Heart left ventricle (tissue), 16 donors: ENCODE measurements at regions of chr17 and their contacts with region 1.

Region 1: GRCh38 chr17:36486204-36487194 is at the start of gene ZNHIT3:
- DNase-seq: peak; percentile 92 to 95 (median 93)
- ATAC-seq: peak; percentile 91 to 98 (median 97)
- H3K4me3 ChIP-seq: peak within 1 kb of the TSS; percentile 74 to 99 (median 96)
- H3K27ac ChIP-seq: peak within 1 kb of the TSS; percentile 63 to 88 (median 80)
- H3K4me1 ChIP-seq: peaks cover 2 to 40% (median 29%) of the 10 kb centered on the region in 12 donors
- H3K27me3 ChIP-seq: peaks cover 0 to 14% (median 0%) of the 10 kb centered on the region in 9 donors
- CTCF ChIP-seq: no peak
- POLR2A ChIP-seq: peak in 1 of 2 donors; percentile 64
- total RNA-seq, gene ZNHIT3: 14.8 to 28.5 (median 23.1) TPM

Region 2: DNA sequence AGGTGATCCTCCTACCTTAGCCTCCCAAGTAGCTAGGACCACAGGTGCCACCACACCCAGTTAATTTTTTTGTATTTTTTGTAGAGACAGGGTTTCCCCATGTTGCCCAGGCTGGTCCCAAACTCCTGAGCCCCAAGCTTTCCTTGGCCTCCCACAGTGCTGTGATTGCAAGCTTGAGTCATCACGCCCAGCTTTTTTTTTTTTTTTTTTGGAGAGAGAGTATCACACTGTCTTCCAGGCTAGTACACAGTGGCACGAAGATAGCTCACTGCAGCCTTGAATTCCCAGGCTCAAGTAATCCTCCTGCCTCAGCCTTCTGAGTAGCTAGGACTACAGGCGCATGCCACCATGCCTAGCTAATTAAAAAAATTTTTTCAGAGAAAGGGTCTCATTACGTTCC is 645.0 kb before region 1 on chr17:
- intact Hi-C with region 1: no loop called
- DNase-seq: no peak
- ATAC-seq: peak in 1 of 4 donors; percentile 25
- H3K4me3 ChIP-seq: no peak overlapping the region
- H3K27ac ChIP-seq: no peak overlapping the region
- H3K4me1 ChIP-seq: no peaks in the 10 kb centered on the region
- H3K27me3 ChIP-seq: no peaks in the 10 kb centered on the region
- CTCF ChIP-seq: no peak
- POLR2A ChIP-seq: no peak

Region 3: GRCh38 chr17:35977509-35977908 is 509.0 kb before region 1 on chr17:
- intact Hi-C with region 1: loop called in 5 of 10 experiments (anchors 5 to 10 kb)
- DNase-seq: no peak
- ATAC-seq: no peak
- H3K4me3 ChIP-seq: no peak overlapping the region
- H3K27ac ChIP-seq: no peak overlapping the region
- H3K4me1 ChIP-seq: peaks cover 0 to 16% (median 7%) of the 10 kb centered on the region in 12 donors
- H3K27me3 ChIP-seq: no peaks in the 10 kb centered on the region
- CTCF ChIP-seq: no peak
- POLR2A ChIP-seq: no peak

Region 4: DNA sequence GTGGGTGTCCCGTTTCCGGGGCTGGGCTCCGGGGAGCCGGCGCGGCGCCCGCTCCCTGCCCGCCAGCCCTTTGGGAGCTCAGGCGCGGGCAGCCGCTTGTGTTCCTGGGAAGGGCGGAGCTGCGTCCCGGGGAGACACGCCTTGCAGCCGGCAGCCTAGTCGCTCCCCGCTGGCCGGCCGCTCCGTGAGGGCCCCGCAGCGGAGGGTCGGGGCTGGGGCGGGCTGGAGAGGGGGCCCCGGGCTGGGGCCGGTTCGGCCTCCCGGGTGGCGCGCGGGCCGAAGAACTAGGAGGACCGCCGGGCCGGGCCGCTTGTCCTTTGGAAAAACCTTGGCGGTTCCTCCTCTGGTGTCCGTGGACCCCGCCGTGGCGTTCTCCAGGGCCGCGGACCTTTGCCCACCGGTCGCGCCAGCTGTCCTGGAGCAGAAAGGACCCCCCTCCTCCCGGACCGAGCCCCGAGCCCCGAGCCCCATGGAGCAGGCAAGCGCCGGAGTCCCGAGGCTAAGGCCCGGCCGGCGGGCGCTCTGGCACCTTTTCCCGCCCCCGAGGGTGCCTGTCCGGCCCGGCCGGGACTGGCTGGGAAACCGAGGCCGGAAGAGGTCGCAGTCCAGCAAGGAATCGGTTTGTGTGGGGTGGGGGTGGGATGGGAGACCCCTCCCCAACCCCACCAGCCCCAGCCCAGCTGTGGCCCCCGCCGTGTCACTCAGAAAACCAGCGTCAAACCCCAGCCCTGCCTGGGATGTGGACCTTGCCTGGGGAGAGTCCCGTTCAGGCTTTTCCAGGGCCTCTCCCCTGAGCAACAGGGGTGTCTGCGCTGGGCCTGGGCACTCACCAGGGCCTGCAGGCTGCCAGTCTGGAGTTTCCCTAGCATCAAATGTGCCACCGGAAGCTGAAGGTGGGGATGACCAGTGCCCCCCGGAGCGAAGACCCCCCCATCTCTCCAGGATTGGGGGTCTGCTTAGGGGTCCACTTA is 303.2 kb before region 1 on chr17:
- intact Hi-C with region 1: loop called in 1 of 10 experiments (anchors 10 kb)
- DNase-seq: peak; percentile 72 to 93 (median 81)
- ATAC-seq: peak in 3 of 4 donors; percentile 81 to 95 (median 90)
- H3K4me3 ChIP-seq: peak overlapping the region; percentile 30 to 75 (median 62)
- H3K27ac ChIP-seq: peak overlapping the region in 8 of 12 donors; percentile 23 to 78 (median 60)
- H3K4me1 ChIP-seq: peaks cover 0 to 21% (median 2%) of the 10 kb centered on the region in 12 donors
- H3K27me3 ChIP-seq: peaks cover 0 to 45% (median 0%) of the 10 kb centered on the region in 9 donors
- CTCF ChIP-seq: peak in 1 of 12 donors; percentile 16
- POLR2A ChIP-seq: no peak

Region 5: DNA sequence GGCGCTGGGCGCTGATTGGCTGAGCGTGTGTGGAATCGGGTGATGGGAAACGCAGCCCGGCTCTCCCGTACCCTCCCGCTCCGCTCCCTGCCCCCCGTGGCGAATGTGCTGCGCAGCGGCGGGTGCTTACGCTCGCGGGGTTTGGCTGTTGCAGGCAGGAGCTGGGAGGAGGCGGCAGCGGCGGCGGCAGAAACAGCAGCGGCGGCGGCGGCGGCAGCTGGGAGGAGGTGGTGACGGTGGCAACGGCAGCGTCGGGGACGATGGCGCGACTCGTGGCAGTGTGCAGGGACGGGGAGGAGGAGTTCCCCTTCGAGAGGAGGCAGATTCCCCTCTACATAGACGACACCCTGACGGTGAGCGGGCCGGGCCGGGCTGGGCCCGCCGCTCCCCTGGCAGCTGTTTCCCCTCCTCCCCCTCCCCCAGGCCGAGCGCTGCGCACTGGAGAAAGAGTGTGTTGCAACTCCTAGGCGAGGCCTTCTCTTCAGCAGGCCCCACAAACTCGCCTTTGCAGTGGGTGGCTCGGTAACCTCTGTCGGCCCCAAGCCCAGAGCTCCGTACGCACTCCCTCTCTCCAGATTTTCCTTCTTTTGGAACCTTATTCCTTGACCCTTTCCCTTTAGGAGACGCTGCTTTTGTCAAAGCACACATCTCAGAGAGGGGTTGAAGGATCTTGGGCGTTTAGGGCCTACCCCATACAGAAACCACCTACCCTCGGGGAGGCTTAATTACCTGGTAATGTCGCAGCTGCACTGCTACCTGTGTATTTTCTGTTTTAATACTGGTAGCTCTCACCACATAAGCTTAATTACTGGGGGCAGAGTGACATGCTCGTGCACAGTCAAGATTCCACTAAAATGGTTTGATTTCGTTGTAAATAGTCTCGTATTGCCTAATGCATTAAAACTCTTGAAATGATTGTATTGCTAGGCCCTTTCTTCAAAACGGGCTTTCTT is 59.2 kb after region 1 on chr17:
- intact Hi-C with region 1: loop called in 1 of 10 experiments (anchors 5 kb)
- DNase-seq: peak; percentile 96 to 97 (median 97)
- ATAC-seq: peak; percentile 90 to 95 (median 93)
- H3K4me3 ChIP-seq: peak overlapping the region; percentile 63 to 99 (median 84)
- H3K27ac ChIP-seq: peak overlapping the region; percentile 93 to 100 (median 99)
- H3K4me1 ChIP-seq: peaks cover 12 to 58% (median 43%) of the 10 kb centered on the region in 12 donors
- H3K27me3 ChIP-seq: no peaks in the 10 kb centered on the region
- CTCF ChIP-seq: no peak
- POLR2A ChIP-seq: peak in 1 of 2 donors; percentile 48